ENCODE measurements at regions of chr15 and their contacts with region 1.

Region 1: DNA sequence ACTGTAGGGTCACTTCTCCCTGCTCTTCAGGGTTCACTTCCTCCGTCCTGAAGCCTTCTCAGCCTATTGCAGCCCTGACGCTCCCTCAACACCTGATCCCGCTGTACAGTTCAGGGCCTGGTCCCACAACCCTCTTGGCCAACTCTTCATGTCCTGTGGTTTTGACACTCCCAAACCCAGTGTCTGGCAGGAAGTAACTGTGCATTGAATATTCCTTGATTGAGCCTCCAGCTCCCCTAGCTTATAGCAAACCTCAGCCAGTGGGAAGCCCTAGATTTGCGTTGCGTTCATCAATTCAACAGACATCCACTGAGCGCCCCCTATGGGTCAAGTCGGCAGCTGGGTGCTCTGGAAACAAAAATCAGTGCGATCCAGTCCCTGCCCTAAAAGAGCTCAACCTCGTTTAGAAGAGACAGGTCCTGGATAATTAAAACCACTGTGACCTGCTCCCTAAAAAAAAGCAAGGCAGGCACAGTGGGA is 13.5 kb downstream of the UBAP1L start:
- DNase-seq: peak; percentile 36
- H3K4me3 ChIP-seq: no peak overlapping the region
- H3K27ac ChIP-seq: no peak overlapping the region
- H3K27me3 ChIP-seq: no peaks in the 10 kb centered on the region
- CTCF ChIP-seq: peak; percentile 93

Region 2: DNA sequence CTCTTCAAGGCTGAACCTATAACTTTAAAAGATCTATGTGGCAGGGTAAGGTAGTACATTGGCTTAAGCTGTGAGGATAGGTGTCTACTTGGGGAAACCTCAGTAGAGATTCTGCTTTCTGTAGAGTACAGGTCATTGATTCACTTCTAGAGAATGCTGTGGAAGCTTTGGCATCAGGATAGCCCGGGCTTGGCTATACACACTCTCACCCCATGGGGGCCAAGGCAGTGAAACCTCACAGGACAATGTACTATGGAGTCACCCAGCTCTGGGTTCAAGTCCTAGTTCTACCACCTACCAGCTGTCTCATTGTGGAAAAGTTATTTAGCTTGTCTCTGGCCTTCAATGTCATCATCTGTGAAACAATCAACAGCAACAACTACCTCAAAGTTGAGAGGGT is 81.0 kb before region 1 on chr15:
- CTCF ChIA-PET with region 1: interaction called, 11 read pairs
- POLR2A ChIA-PET with region 1: no interaction called
- DNase-seq: no peak
- H3K4me3 ChIP-seq: no peak overlapping the region
- H3K27ac ChIP-seq: no peak overlapping the region
- H3K27me3 ChIP-seq: no peaks in the 10 kb centered on the region
- CTCF ChIP-seq: no peak

Region 3: GRCh38 chr15:65042776-65043327 is 58.6 kb before region 1 on chr15:
- CTCF ChIA-PET with region 1: interaction called, 10 read pairs
- POLR2A ChIA-PET with region 1: interaction called, 3 read pairs
- DNase-seq: no peak
- H3K4me3 ChIP-seq: no peak overlapping the region
- H3K27ac ChIP-seq: no peak overlapping the region
- H3K27me3 ChIP-seq: no peaks in the 10 kb centered on the region
- CTCF ChIP-seq: no peak

Region 4: GRCh38 chr15:65049418-65049840 is 52.0 kb before region 1 on chr15:
- CTCF ChIA-PET with region 1: interaction called, 127 read pairs
- POLR2A ChIA-PET with region 1: interaction called, 4 read pairs
- DNase-seq: no peak
- H3K4me3 ChIP-seq: peak overlapping the region; percentile 25
- H3K27ac ChIP-seq: no peak overlapping the region
- H3K27me3 ChIP-seq: no peaks in the 10 kb centered on the region
- CTCF ChIP-seq: no peak